PC-9 (cell line): ENCODE measurements at regions of chr3 and their contacts with region 1.

Region 1: DNA sequence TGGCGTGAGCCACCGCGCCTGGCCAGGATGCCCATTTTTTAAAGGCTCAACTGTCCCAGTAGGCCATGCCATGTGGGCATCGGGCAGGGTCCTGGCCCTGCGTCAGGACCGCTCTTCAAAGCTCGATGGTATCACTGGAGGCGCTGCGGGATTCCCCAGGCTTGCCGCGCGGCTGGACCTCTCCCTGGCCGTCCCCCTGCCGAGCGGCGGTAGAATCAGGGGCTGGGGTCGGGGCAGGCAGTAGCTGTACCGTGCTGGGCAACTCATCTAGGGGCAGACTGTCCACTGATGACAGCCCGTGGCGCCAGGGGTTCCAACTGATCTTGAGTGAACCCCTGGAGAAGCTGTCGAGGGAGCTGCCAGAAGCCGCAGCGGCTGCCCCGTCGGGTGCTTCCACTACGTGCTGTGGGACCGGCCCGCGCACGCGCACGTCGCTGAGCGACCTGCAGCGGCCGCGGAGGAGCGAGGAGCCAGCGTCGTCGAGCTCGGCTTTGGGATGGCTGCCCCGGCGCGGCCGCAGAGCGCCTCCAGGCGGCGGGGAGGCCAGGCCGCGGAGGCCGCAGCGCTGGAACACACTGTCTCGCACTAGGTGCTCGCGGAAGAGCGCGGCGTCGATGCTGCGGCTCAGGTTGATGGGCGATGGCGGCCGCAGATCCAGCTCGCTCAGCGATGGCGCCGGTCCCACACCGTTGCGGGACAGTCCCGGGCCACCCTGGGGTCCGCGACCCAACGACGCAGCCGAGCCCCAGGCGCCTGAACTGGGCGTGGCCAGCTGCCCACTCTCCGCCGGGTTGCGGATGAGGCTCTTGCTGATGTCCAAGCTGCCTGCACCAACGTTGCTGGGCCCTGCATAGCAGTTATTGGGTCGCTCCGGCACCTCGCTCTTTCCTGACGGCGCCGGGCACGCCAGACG is 5.8 kb downstream of the PRRT3 start:
- DNase-seq: peak; percentile 74 to 91
- H3K4me3 ChIP-seq: peak overlapping the region; percentile 72
- H3K27ac ChIP-seq: no peak overlapping the region
- H3K4me1 ChIP-seq: peaks cover 6% of the 10 kb centered on the region
- H3K27me3 ChIP-seq: no peaks in the 10 kb centered on the region
- CTCF ChIP-seq: peak; percentile 71

Region 2: DNA sequence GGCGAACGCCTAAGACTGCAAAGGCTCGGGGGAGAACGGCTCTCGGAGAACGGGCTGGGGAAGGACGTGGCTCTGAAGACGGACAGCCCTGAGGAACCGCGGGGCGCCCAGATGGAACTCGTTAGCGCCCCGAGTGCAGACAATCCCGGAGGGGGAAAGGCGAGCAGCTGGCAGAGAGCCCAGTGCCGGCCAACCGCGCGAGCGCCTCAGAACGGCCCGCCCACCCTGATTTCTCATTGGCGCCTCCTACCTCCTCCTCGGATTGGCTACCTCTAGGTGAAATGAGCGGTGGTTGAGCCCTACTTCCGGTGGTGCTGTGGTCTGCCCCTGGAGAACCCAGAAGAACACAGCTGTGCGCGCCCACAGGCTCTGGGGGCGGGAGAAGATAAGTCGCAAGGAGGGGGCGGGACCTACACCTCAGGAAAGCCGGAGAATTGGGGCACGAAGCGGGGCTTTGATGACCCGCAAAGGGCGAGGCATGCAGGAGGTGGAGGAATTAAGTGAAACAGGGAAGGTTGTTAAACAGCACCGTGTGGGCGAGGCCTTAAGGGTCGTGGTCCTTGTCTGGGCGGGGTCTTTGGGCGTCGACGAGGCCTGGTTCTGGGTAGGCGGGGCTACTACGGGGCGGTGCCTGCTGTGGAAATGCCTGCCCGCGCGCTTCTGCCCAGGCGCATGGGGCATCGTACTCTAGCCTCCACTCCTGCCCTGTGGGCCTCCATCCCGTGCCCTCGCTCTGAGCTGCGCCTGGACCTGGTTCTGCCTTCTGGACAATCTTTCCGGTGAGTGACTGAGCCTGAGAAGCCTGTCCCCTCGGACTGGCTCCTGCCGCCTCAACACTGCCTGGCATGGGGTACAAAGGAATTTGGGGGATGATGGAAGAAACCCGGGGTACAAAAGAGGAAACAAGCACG is 196.5 kb before region 1 on chr3 and contains the start of gene OGG1:
- CTCF ChIA-PET with region 1: no interaction called
- POLR2A ChIA-PET with region 1: no interaction called
- intact Hi-C with region 1: loop called (anchors 1 kb)
- DNase-seq: peak; percentile 92 to 96
- H3K4me3 ChIP-seq: peak within 1 kb of the TSS; percentile 59
- H3K27ac ChIP-seq: no peak within 1 kb of the TSS; the same call in 1 of the 2 replicates
- H3K4me1 ChIP-seq: peaks cover 14% of the 10 kb centered on the region
- H3K27me3 ChIP-seq: no peaks in the 10 kb centered on the region
- CTCF ChIP-seq: no peak
- total RNA-seq, gene OGG1: 22.1 and 24.3 TPM in 2 replicates

Region 3: GRCh38 chr3:9826815-9827567 is 119.4 kb before region 1 on chr3:
- CTCF ChIA-PET with region 1: interaction called, 3 read pairs
- POLR2A ChIA-PET with region 1: no interaction called
- intact Hi-C with region 1: loop called (anchors 5 kb)
- DNase-seq: no peak
- H3K4me3 ChIP-seq: no peak overlapping the region
- H3K27ac ChIP-seq: no peak overlapping the region
- H3K4me1 ChIP-seq: no peaks in the 10 kb centered on the region
- H3K27me3 ChIP-seq: no peaks in the 10 kb centered on the region
- CTCF ChIP-seq: peak; percentile 56

Region 4: DNA sequence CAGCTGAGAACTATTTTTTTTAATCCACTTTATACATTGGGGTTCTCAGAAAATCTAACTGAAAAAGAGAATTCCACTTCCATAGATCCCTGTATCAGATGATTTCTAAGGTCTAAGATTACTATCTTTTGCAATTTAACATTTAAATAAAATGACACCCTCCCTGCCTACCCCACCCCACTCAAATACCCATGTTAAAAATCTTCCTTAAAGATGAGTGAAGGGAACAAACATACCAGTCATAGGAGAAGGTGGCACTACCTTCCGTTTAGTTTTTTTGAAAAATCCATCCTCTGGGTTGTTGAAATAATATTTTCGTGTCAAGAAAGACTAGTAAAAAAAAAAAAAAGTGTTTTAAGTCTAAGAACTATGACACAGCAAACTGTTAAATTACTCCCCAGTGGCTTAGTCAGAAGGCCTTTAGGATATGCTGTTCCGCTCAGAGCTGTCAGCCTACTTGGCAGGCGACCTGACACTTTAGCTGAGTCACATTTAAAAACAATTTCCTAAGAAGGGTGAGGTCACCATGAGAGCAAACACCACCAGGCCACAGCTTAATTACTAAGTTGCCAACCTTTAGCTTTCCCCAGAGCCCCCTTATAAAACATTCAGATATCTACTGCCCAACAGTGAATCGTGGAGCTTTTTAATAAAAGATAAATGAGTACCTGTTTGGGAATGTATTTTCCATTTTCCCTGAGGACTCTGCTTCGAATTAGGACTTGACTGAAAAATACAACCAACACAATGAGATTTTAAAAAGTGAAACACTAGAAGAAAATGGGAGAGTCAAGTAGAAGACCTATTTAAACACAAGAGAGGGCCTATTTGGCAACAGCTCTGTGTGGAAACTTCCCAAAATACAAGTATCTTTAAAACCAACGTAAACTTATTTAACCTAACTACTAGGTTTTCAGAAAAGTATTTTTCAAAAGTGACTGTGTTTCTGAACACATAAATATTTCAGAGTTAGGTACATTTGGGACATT is 30.6 kb after region 1 on chr3:
- CTCF ChIA-PET with region 1: interaction called, 4 read pairs
- POLR2A ChIA-PET with region 1: interaction called, 3 read pairs
- intact Hi-C with region 1: loop called (anchors 2 kb)
- DNase-seq: peak; percentile 69 to 93
- H3K4me3 ChIP-seq: no peak overlapping the region
- H3K27ac ChIP-seq: peak overlapping the region; percentile 90
- H3K4me1 ChIP-seq: peaks cover 26% of the 10 kb centered on the region
- H3K27me3 ChIP-seq: no peaks in the 10 kb centered on the region
- CTCF ChIP-seq: no peak